Activated CD4-positive, alpha-beta memory T cell treated with anti-CD3 and anti-CD28 coated beads, Interleukin-2, amount 10 ng/mL, durations not matched to agents 7 days and 5 days (primary cell): ENCODE measurements at regions of chr2 and their contacts with region 1.

Region 1: GRCh38 chr2:230007931-230008707 is 60.6 kb downstream of the SLC16A14 start:
- DNase-seq: peak; percentile 83
- H3K4me3 Mint-ChIP-seq: no peak overlapping the region
- H3K27ac Mint-ChIP-seq: no peak overlapping the region
- H3K4me1 Mint-ChIP-seq: peaks cover 7% of the 10 kb centered on the region
- H3K27me3 Mint-ChIP-seq: no peaks in the 10 kb centered on the region

Region 2: DNA sequence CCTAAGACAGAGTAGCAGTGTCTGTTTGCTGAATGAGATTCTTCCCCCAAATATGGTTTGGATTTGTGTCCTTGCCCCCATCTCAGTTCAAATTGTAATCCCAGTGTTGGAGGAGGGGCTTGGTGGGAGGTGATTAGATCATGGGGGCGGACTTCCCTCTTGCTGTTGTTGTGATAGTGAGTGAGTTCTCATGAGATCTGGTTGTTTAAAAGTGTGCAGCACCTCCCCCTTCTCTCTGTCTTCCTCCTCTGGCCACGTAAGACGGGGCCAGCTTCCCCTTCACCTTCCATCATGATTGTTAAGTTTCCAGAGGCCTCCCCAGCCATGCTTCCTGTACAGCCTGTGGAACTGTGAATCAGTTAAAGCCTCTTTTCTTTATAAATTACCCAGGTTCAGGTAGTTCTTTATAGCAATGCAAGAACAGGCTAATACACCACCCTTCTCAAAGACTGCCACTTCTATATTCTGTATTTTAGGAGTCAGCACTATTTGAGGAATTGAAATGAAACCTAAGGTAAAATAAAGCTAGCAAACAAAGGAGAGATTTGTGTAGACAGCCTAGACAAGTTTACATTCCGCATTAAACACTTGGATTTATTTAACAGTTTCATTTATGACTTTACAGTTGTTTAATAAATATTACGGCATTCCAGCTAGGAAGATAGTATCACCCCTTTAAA is 64.2 kb before region 1 on chr2:
- CTCF ChIA-PET with region 1: no interaction called
- POLR2A ChIA-PET with region 1: no interaction called
- DNase-seq: no peak
- H3K4me3 Mint-ChIP-seq: no peak overlapping the region
- H3K27ac Mint-ChIP-seq: no peak overlapping the region
- H3K4me1 Mint-ChIP-seq: peaks cover 8% of the 10 kb centered on the region
- H3K27me3 Mint-ChIP-seq: no peaks in the 10 kb centered on the region

Region 3: GRCh38 chr2:230023309-230023708 is 15.2 kb after region 1 on chr2:
- CTCF ChIA-PET with region 1: interaction called, 16 read pairs
- POLR2A ChIA-PET with region 1: no interaction called
- DNase-seq: no peak
- H3K4me3 Mint-ChIP-seq: no peak overlapping the region
- H3K27ac Mint-ChIP-seq: no peak overlapping the region
- H3K4me1 Mint-ChIP-seq: no peaks in the 10 kb centered on the region
- H3K27me3 Mint-ChIP-seq: peaks cover 2% of the 10 kb centered on the region